ENCODE measurements at regions of chr11 and their contacts with region 1.

Region 1: DNA sequence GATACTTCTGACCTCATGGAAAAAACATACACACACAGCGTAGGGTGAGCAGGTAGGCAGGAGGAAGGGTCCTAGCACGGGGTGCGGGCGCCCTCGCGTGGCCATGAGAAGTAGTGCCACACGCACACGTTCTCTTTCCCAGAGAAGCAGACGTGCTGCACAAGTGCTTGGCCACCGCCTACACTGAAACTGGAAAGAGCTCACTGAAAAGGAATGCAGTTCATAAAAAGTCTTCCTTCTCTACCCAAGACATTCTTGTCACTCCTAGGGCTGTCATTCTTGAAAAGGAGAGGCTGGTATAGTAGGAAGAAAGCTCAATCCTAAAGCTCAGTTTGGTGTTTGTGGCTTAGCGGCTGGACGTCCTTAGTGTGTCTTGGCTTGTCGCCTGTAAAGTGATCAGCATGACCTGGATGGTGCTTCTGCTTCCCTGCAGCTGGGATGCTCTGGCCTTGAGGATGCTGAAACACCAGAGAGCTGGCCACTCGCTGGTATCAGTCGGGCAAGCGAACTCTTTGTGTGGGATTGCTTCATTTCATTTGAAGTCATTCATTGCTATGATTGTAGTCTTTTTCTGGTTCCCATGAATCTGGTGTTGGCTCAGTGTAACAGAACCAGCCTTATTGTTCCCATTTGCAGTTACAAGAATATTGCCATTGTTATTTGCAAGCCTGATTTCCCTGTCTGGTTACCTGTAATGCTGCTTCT is 303.8 kb downstream of the NTM start:
- DNase-seq: peak; percentile 50 to 96
- H3K4me3 ChIP-seq: no peak overlapping the region
- H3K27ac ChIP-seq: no peak overlapping the region
- H3K4me1 ChIP-seq: peaks cover 3 to 9% (median 5%) of the 10 kb centered on the region in 4 experiments; a peak in 5 of 7 replicates
- H3K27me3 ChIP-seq: no peaks in the 10 kb centered on the region; a peak in 1 of 7 replicates
- CTCF ChIP-seq: peak; percentile 95 to 97 (median 97)
- EP300 ChIP-seq: no peak
- POLR2A ChIP-seq: no peak
- RAD21 ChIP-seq: peak; percentile 99

Region 2: GRCh38 chr11:131534611-131535010 is 139.6 kb before region 1 on chr11:
- CTCF ChIA-PET with region 1: interaction called, 12 read pairs
- POLR2A ChIA-PET with region 1: no interaction called
- DNase-seq: no peak
- H3K4me3 ChIP-seq: no peak overlapping the region
- H3K27ac ChIP-seq: no peak overlapping the region
- H3K4me1 ChIP-seq: peaks cover 0 to 6% (median 0%) of the 10 kb centered on the region in 4 experiments; a peak in 2 of 7 replicates
- H3K27me3 ChIP-seq: no peaks in the 10 kb centered on the region
- CTCF ChIP-seq: no peak
- EP300 ChIP-seq: no peak
- POLR2A ChIP-seq: no peak
- RAD21 ChIP-seq: no peak

Region 3: DNA sequence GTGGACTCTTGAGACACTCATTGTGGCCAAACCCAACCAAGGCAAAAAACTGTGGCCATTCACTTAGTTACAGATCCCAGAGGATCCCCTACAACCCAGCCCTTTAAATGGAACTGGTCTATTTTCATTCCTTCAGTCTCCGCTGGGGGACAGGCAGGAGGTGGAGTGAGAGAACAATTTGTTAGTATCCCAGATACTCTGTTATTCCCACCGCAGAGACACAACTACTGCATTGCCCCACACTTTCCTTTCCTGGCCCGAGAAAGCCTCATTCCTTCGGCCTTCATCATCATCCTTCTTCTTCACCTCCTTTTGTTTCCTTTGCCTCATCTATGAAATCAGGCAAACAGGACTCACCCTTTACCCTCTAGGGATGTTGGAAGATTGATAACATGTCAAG is 112.7 kb before region 1 on chr11:
- CTCF ChIA-PET with region 1: interaction called, 1,023 read pairs
- POLR2A ChIA-PET with region 1: no interaction called
- DNase-seq: no peak
- H3K4me3 ChIP-seq: no peak overlapping the region
- H3K27ac ChIP-seq: no peak overlapping the region
- H3K4me1 ChIP-seq: peaks cover 0 to 7% (median 0%) of the 10 kb centered on the region in 4 experiments; a peak in 4 of 7 replicates
- H3K27me3 ChIP-seq: no peaks in the 10 kb centered on the region
- CTCF ChIP-seq: no peak
- EP300 ChIP-seq: no peak
- POLR2A ChIP-seq: no peak
- RAD21 ChIP-seq: peak in 1 of 2 experiments; percentile 5; a peak in 1 of 4 replicates

Region 4: DNA sequence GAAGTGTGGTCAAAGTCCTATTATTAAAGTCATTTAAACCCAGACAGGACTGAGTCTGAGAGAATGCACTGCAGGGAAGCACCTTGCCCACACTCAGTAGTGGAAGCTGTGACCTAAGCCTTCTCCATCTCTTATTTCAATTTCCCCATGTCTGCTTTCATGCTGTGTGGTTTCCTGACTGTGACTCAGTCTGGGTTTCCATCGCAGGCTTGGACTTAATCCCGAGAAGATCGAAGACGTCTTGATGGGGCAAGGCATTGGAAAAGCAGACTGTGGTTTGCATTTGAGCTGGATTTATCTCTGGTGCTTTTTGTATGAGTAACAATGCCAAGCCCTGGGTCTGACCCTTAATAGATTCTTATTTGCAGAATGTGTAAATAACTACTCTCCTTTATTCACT is 64.9 kb before region 1 on chr11:
- CTCF ChIA-PET with region 1: interaction called, 20 read pairs
- POLR2A ChIA-PET with region 1: no interaction called
- DNase-seq: no peak
- H3K4me3 ChIP-seq: no peak overlapping the region
- H3K27ac ChIP-seq: no peak overlapping the region
- H3K4me1 ChIP-seq: peaks cover 2 to 11% (median 6%) of the 10 kb centered on the region in 4 experiments; a peak in 4 of 7 replicates
- H3K27me3 ChIP-seq: peaks cover 0 to 4% (median 3%) of the 10 kb centered on the region in 4 experiments; a peak in 3 of 7 replicates
- CTCF ChIP-seq: no peak
- EP300 ChIP-seq: no peak
- POLR2A ChIP-seq: no peak
- RAD21 ChIP-seq: no peak

Region 5: GRCh38 chr11:131637469-131638175 is 36.6 kb before region 1 on chr11:
- CTCF ChIA-PET with region 1: interaction called, 16 read pairs
- POLR2A ChIA-PET with region 1: no interaction called
- DNase-seq: no peak
- H3K4me3 ChIP-seq: no peak overlapping the region
- H3K27ac ChIP-seq: no peak overlapping the region
- H3K4me1 ChIP-seq: peaks cover 5 to 20% (median 15%) of the 10 kb centered on the region in 4 experiments; a peak in 4 of 7 replicates
- H3K27me3 ChIP-seq: no peaks in the 10 kb centered on the region
- CTCF ChIP-seq: no peak
- EP300 ChIP-seq: no peak
- POLR2A ChIP-seq: no peak
- RAD21 ChIP-seq: no peak

Region 6: DNA sequence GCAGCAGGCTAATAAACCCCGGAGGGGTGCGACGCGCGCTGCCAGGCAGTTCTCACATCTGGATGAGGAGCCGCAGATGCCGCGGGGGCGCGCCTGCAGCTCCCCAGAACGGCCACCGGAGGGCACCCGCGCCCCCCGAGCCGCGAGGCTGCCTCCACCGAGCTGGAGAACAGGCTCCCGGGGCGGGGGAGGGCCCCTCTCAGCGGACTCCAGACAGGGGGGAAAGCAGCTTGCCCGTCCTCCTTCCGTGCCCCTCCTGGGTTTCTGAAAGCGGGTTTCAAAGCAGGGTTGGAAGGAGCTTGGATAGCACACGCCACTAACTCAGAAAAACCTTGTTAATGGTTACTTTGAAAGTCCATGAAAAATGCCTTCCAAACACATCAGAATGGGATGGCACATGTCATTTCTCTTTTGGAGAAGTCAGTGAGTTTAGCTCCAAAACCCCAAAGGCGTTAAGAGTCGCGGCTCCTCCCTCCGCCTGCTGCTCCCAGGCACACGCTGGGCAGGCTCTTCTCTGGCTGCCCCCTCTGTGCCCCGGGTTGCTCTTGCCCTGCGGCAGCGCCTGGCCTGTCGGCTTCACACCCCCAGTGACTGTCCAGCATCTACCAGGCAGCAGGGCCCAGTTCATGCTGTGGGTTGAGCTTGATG is 14.0 kb after region 1 on chr11:
- CTCF ChIA-PET with region 1: interaction called, 91 read pairs
- POLR2A ChIA-PET with region 1: interaction called, 3 read pairs
- DNase-seq: peak; percentile 23 to 93
- H3K4me3 ChIP-seq: peak overlapping the region in 3 of 4 experiments; percentile 16 to 46 (median 24); a peak in 4 of 8 replicates
- H3K27ac ChIP-seq: no peak overlapping the region
- H3K4me1 ChIP-seq: peaks cover 0 to 11% (median 5%) of the 10 kb centered on the region in 4 experiments; a peak in 4 of 7 replicates
- H3K27me3 ChIP-seq: peaks cover 0 to 10% (median 10%) of the 10 kb centered on the region in 4 experiments; a peak in 3 of 7 replicates
- CTCF ChIP-seq: peak; percentile 77 to 93 (median 81)
- EP300 ChIP-seq: 0 out of 3 replicates have a peak, but pooled peaks of 1 of the 2 experiments have one; percentile 30
- POLR2A ChIP-seq: no peak
- RAD21 ChIP-seq: peak; percentile 70 to 80

Region 7: DNA sequence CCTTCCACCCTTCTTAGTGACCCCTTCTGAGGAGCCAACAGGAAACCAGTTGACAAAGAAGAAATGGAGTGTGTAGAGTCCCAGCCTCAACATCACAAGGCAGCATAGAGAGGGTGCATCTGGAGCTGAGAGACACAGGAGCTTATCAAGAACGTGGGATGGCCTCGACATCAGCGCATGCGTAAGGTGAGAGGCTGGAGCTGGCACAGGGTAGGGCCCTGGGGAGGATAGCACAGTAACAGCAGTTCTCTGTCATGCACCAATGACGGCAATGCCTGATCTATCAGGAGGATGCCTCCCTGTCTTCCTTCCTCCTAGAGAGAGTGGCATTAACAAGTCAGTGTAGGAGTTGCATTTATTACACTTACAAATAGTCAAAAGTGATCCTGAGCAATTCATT is 122.3 kb after region 1 on chr11:
- CTCF ChIA-PET with region 1: no interaction called
- POLR2A ChIA-PET with region 1: no interaction called
- DNase-seq: no peak
- H3K4me3 ChIP-seq: no peak overlapping the region
- H3K27ac ChIP-seq: no peak overlapping the region
- H3K4me1 ChIP-seq: peaks cover 5 to 8% (median 7%) of the 10 kb centered on the region in 4 experiments
- H3K27me3 ChIP-seq: no peaks in the 10 kb centered on the region; a peak in 1 of 7 replicates
- CTCF ChIP-seq: no peak
- EP300 ChIP-seq: no peak
- POLR2A ChIP-seq: no peak
- RAD21 ChIP-seq: no peak